ENCODE measurements at regions of chr10 and their contacts with region 1.

Region 1: DNA sequence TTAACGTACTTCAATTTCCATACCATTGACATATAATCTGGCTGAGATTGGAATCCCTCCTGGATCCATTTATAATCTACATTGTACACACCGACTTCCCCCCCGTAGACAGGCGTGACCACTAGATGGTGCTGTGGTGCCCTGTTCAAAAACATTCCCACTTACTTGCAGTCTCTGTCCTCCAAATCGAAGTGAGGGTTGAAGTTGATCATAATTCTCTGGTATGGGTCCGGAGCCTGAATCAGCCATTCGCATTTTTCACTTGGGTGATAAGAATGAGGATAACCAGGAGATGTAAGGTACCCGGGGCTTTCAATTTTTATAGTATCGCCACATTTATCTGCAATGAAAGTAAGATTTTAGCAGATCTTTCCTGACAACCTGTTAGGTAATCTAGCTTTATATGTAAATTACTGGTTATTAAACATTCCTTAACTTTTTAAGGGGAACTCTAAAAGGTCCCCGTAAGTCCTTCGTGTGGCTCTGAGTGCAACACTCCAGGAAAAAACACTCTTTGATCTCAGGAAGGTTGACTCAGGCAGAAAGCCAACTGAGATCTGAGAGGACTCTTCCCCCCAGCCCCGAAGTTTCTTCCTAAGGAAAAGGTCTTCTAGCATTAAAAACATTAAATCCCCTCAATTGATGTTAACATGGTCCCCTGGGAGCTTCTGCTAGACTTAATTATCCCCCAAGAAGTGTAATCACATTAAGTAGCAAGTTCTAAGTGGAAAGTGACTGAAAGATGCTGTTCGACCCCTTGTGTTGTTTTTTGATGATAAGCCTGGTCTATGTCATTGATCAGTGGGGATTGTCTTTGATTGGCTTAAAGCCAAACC is 3.7 kb downstream of the NRP1 start:
- DNase-seq: peak; percentile 91
- H3K4me3 Mint-ChIP-seq: peak overlapping the region; percentile 9
- H3K27ac Mint-ChIP-seq: no peak overlapping the region
- H3K4me1 Mint-ChIP-seq: peaks cover 17% of the 10 kb centered on the region
- H3K27me3 Mint-ChIP-seq: peaks cover 64% of the 10 kb centered on the region

Region 2: DNA sequence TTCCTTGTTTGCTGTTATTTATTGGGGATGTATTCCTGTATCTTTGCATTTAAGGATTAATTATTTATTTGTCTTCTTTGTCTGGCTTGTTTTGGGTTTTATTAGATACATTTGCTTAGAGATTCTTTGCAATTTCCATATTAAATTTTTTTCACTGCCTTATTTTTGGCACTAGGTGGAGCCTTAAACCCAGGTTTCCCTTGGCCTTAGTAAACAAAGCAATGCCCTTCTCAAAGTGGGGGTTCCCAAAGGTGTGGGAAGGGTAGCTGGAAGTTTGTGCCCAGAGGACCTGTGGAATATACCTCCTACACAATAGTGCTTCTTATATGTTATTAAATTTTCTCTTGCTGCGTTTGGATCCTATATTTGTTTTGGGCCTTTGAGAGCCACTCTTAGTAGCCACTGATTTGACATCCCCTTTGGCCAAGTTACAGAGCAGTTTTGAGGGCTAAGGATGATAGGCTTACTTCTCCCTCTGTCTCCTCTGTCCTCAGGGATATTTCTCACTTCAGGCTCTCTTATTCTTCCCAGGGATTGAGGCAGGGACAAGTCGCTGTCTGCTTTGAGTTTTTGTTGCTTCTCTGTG is 535.1 kb before region 1 on chr10:
- intact Hi-C with region 1: loop called (anchors 10 kb)
- DNase-seq: peak; percentile 67
- H3K4me3 Mint-ChIP-seq: no peak overlapping the region
- H3K27ac Mint-ChIP-seq: no peak overlapping the region
- H3K4me1 Mint-ChIP-seq: no peaks in the 10 kb centered on the region
- H3K27me3 Mint-ChIP-seq: peaks cover 5% of the 10 kb centered on the region

Region 3: DNA sequence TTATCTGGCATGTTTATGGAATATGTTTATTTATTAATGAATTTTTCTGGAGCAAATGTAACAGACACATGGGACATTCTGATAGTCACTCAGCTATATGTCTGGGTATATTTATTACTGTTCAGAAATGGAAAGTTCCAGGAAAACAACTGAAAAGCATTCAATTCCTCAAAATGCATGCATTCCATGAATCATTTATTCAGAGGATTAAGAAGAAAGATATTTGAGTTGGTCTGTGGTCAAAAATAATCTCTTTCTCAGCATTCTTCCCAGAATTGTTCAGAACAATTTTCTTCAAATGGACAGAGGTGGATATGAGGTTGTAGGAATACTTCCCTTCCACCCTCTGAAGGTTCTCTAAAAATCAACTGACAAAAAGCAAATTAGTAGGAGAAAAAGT is 275.1 kb before region 1 on chr10:
- intact Hi-C with region 1: no loop called
- DNase-seq: no peak
- H3K4me3 Mint-ChIP-seq: no peak overlapping the region
- H3K27ac Mint-ChIP-seq: no peak overlapping the region
- H3K4me1 Mint-ChIP-seq: no peaks in the 10 kb centered on the region
- H3K27me3 Mint-ChIP-seq: peaks cover 12% of the 10 kb centered on the region

Region 4: DNA sequence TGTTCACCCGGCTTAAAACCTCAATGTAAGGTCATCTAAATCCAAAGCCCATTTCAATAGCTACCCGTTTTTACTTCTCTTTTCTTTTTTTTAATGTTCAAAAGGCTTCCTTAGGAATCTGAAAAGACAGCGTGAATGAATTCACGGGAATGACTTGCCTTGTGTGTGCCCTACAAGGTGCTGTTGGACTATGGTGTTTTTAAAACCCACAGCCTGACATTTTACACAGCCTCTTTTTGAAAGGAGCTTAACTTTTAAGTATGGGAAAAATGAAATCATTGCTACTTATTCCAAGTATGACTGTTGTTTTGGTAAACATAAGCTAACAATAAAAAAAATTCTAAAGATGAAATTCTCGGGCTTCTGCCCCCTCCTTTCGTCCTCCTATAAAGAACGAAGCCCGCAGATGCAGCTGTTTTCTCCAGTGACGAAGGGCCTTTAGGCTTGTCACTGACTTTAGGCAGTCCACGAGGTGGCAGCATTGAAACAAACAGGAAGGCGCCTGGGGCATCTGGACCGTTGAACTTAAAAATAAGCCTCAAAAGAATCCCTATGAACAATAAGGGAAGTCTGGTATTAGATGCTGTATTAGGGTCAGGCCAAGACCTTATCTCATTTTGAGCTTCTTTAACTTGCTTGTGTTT is 137.6 kb before region 1 on chr10:
- intact Hi-C with region 1: loop called (anchors 1 kb)
- DNase-seq: peak; percentile 90
- H3K4me3 Mint-ChIP-seq: no peak overlapping the region
- H3K27ac Mint-ChIP-seq: no peak overlapping the region
- H3K4me1 Mint-ChIP-seq: no peaks in the 10 kb centered on the region
- H3K27me3 Mint-ChIP-seq: peaks cover 45% of the 10 kb centered on the region

Region 5: DNA sequence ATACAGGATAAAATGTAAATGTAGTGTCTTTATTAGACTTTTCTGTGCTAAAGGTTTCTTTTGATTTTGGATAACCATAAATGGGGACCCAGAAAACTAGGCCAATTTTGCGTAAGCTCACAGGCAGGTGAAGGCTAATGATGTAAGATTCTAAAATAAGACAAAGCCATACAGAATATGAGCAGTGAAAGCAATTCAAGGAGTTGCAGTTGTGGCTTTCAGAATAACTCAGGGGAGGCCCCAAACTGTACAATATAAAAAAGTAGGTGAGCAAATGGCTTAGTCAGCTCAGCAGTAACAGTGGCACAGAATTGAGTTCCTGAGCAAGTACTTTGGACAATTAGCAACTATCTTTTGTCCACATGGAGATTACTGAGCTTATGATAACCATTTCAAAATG is 85.4 kb after region 1 on chr10:
- intact Hi-C with region 1: loop called (anchors 5 kb)
- DNase-seq: no peak
- H3K4me3 Mint-ChIP-seq: no peak overlapping the region
- H3K27ac Mint-ChIP-seq: no peak overlapping the region
- H3K4me1 Mint-ChIP-seq: no peaks in the 10 kb centered on the region
- H3K27me3 Mint-ChIP-seq: peaks cover 33% of the 10 kb centered on the region

Region 6: DNA sequence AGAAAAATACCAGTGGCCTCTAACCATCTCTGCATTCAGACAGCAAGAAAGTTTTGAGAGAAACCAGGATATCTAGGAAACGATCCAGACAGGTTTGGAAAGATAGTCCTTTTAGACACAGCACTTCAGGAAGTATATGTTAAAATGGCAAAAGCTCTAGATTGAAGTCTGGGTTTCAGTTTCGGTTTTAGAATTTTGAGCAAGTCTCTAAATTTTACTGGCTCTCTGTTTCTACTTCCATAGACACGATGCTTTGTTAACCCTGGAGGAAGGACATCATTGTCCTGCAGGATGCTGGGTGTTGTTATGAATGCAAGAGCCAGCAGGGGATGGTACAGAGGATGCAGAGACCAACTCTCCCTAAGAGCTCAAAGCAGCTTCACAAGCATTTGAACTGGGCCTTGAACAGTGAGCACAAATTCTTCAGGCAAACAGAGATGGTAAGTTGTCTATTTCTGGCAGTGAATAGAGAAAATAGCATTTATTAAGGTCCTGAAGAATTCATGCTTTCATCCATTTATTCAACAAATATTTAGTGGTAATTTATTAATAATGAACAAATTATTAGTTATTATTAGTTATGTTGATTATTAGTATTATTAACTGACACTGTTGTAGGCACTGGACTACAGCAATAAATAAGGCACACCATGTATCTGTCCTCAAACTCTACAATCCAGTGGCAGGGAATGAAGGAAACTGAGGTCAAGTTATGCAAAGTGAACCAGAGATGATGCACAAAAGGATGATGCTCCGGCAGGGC is 156.4 kb after region 1 on chr10:
- intact Hi-C with region 1: loop called (anchors 10 kb)
- DNase-seq: peak; percentile 61
- H3K4me3 Mint-ChIP-seq: peak overlapping the region; percentile 50
- H3K27ac Mint-ChIP-seq: no peak overlapping the region
- H3K4me1 Mint-ChIP-seq: peaks cover 5% of the 10 kb centered on the region
- H3K27me3 Mint-ChIP-seq: peaks cover 5% of the 10 kb centered on the region

Region 7: GRCh38 chr10:34121781-34122628 is 791.2 kb after region 1 on chr10:
- intact Hi-C with region 1: loop called (anchors 5 kb)
- DNase-seq: peak; percentile 77
- H3K4me3 Mint-ChIP-seq: peak overlapping the region; percentile 56
- H3K27ac Mint-ChIP-seq: peak overlapping the region; percentile 77
- H3K4me1 Mint-ChIP-seq: peaks cover 24% of the 10 kb centered on the region
- H3K27me3 Mint-ChIP-seq: no peaks in the 10 kb centered on the region

Region 8: GRCh38 chr10:34637418-34637911 is 1306.7 kb after region 1 on chr10:
- intact Hi-C with region 1: loop called (anchors 1 kb)
- DNase-seq: peak; percentile 90
- H3K4me3 Mint-ChIP-seq: no peak overlapping the region
- H3K27ac Mint-ChIP-seq: no peak overlapping the region
- H3K4me1 Mint-ChIP-seq: peaks cover 2% of the 10 kb centered on the region
- H3K27me3 Mint-ChIP-seq: no peaks in the 10 kb centered on the region

Measured in activated CD4-positive, alpha-beta T cell treated with anti-CD3 and anti-CD28 coated beads, Interleukin-2, amount 10 ng/mL, durations not matched to agents 24 days and 14 days (primary cell).